ENCODE measurements at regions of chr10 and their contacts with region 1.

Region 1: DNA sequence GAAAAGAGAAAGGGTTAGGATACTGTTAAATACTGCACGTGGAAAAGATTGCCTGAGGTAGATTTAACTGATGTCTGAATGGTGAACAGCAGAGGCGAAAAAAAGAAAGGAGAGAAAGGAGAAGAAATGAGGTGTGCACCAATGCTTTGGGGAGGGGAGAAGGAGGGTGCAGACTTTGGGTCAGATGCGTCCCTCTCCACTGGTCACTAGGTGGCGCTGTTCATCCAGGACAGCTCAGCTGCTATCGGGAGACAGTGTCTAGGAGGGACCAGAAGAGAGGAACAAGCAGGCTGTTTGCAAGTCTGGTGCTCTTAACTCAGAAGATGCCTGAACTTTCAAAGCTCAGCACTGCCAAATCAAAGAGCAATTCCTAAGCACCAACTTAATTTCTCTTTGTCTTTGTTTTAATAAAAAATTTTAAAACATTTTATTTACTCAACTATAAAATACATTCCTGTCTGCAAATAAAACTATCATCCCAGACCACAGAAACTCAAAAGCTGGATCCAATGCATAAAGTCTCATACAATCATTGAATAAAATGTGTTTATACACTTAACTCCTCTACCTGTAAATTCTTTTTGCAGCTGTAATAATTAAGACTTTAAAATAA is 83.9 kb upstream of the PDLIM1 start:
- DNase-seq: peak; percentile 77 to 84
- ATAC-seq: peak; percentile 97 to 99
- H3K4me3 ChIP-seq: no peak overlapping the region
- H3K27ac ChIP-seq: no peak overlapping the region
- H3K4me1 ChIP-seq: no peaks in the 10 kb centered on the region
- CTCF ChIP-seq: peak; percentile 91
- EP300 ChIP-seq: no peak
- POLR2A ChIP-seq: no peak
- RAD21 ChIP-seq: peak; percentile 85 to 94

Region 2: GRCh38 chr10:95350219-95350829 is 24.4 kb before region 1 on chr10:
- CTCF ChIA-PET with region 1: interaction called, 10 read pairs
- POLR2A ChIA-PET with region 1: no interaction called
- DNase-seq: no peak
- ATAC-seq: no peak
- H3K4me3 ChIP-seq: no peak overlapping the region
- H3K27ac ChIP-seq: peak overlapping the region in 1 of 2 experiments; percentile 49; a peak in 3 of 6 replicates
- H3K4me1 ChIP-seq: peaks cover 32% of the 10 kb centered on the region
- CTCF ChIP-seq: no peak
- EP300 ChIP-seq: no peak
- POLR2A ChIP-seq: no peak
- RAD21 ChIP-seq: no peak

Region 3: DNA sequence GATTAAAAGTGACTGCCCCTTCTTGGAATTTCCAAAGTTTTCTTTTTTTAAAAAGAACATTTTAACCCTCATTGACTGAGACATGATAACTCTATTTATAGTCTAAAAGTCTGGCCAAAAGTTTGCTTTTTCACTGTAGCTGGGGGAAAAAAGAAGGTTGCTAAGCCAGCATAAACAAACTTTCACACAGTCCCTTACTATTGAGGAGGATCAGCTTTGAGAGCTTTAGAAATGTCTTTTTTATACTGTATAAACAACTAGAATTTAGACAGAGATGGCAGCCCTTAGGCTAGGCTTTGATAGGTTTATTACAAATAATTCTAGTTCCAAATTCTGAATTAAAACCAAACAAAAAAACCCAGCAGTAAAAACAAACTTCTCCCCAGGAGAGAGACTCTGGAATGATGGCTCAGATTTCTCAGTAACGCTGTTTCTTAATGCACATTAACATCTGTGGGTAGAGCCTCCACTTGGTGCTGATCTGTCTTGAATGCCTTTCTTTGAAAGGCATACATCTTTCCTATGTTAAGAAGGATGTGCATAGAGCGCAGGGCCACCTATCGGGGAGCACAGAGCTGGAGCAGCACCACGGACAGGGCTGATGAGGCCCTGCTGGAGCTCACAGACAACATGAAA is 17.0 kb after region 1 on chr10:
- CTCF ChIA-PET with region 1: interaction called, 48 read pairs
- POLR2A ChIA-PET with region 1: interaction called, 3 read pairs
- DNase-seq: peak; percentile 8 to 23
- ATAC-seq: peak; percentile 54 to 74; a peak in 5 of 6 replicates
- H3K4me3 ChIP-seq: no peak overlapping the region
- H3K27ac ChIP-seq: no peak overlapping the region
- H3K4me1 ChIP-seq: peaks cover 18% of the 10 kb centered on the region
- CTCF ChIP-seq: no peak
- EP300 ChIP-seq: no peak
- POLR2A ChIP-seq: no peak
- RAD21 ChIP-seq: no peak

Region 4: GRCh38 chr10:95445837-95446486 is 71.3 kb after region 1 on chr10:
- CTCF ChIA-PET with region 1: interaction called, 20 read pairs
- POLR2A ChIA-PET with region 1: no interaction called
- DNase-seq: peak; percentile 81 to 92
- ATAC-seq: peak; percentile 84 to 91
- H3K4me3 ChIP-seq: no peak overlapping the region
- H3K27ac ChIP-seq: peak overlapping the region; percentile 42 to 43; a peak in 4 of 6 replicates
- H3K4me1 ChIP-seq: peaks cover 17% of the 10 kb centered on the region
- CTCF ChIP-seq: peak; percentile 75
- EP300 ChIP-seq: no peak
- POLR2A ChIP-seq: no peak
- RAD21 ChIP-seq: peak; percentile 49 to 52; a peak in 4 of 5 replicates

Region 5: GRCh38 chr10:95588025-95588424 is 213.3 kb after region 1 on chr10:
- CTCF ChIA-PET with region 1: interaction called, 13 read pairs
- POLR2A ChIA-PET with region 1: no interaction called
- DNase-seq: no peak
- ATAC-seq: no peak
- H3K4me3 ChIP-seq: no peak overlapping the region
- H3K27ac ChIP-seq: no peak overlapping the region
- H3K4me1 ChIP-seq: no peaks in the 10 kb centered on the region
- CTCF ChIP-seq: no peak
- EP300 ChIP-seq: no peak
- POLR2A ChIP-seq: no peak
- RAD21 ChIP-seq: no peak